ENCODE measurements at regions of chr10 and their contacts with region 1.

Region 1: GRCh38 chr10:29160110-29160669 is 128.7 kb upstream of the LYZL1 start:
- DNase-seq: no peak
- ATAC-seq: no peak
- H3K4me3 ChIP-seq: no peak overlapping the region
- H3K27ac ChIP-seq: no peak overlapping the region
- H3K4me1 ChIP-seq: peaks cover 0 to 10% (median 0%) of the 10 kb centered on the region in 12 donors
- H3K27me3 ChIP-seq: no peaks in the 10 kb centered on the region
- CTCF ChIP-seq: no peak
- POLR2A ChIP-seq: no peak

Region 2: DNA sequence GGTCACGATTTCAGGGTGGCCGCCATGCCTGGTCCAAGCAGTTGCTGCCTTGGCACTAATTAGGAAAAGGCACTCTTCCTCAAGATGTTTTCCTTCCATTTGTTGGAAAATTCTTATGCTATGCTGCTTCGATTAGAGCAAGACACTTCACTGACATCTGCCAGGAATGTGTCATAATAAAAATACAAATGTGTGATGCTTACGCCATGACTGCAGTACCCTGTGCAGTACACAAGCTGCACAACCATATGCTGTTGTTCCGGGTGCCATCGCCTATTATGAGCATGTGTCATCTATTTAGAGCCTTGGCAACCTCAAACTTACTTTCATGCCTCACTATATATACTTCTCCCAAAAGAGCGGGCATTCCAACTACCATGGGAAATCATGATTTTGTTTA is 842.4 kb before region 1 on chr10:
- intact Hi-C with region 1: no loop called
- DNase-seq: no peak
- ATAC-seq: no peak
- H3K4me3 ChIP-seq: no peak overlapping the region
- H3K27ac ChIP-seq: no peak overlapping the region
- H3K4me1 ChIP-seq: no peaks in the 10 kb centered on the region
- H3K27me3 ChIP-seq: peaks cover 0 to 2% (median 0%) of the 10 kb centered on the region in 9 donors
- CTCF ChIP-seq: no peak
- POLR2A ChIP-seq: no peak

Region 3: GRCh38 chr10:29089091-29089490 is 71.1 kb before region 1 on chr10:
- intact Hi-C with region 1: no loop called
- DNase-seq: no peak
- ATAC-seq: no peak
- H3K4me3 ChIP-seq: no peak overlapping the region
- H3K27ac ChIP-seq: no peak overlapping the region
- H3K4me1 ChIP-seq: no peaks in the 10 kb centered on the region
- H3K27me3 ChIP-seq: no peaks in the 10 kb centered on the region
- CTCF ChIP-seq: no peak
- POLR2A ChIP-seq: no peak

Region 4: GRCh38 chr10:29171711-29172110 is 11.5 kb after region 1 on chr10:
- intact Hi-C with region 1: loop called in 1 of 10 experiments (anchors 1 kb)
- DNase-seq: no peak
- ATAC-seq: no peak
- H3K4me3 ChIP-seq: no peak overlapping the region
- H3K27ac ChIP-seq: no peak overlapping the region
- H3K4me1 ChIP-seq: no peaks in the 10 kb centered on the region
- H3K27me3 ChIP-seq: peaks cover 0 to 3% (median 0%) of the 10 kb centered on the region in 9 donors
- CTCF ChIP-seq: no peak
- POLR2A ChIP-seq: no peak

Region 5: GRCh38 chr10:29181936-29182335 is 21.7 kb after region 1 on chr10:
- intact Hi-C with region 1: no loop called
- DNase-seq: no peak
- ATAC-seq: no peak
- H3K4me3 ChIP-seq: no peak overlapping the region
- H3K27ac ChIP-seq: no peak overlapping the region
- H3K4me1 ChIP-seq: no peaks in the 10 kb centered on the region
- H3K27me3 ChIP-seq: peaks cover 0 to 5% (median 0%) of the 10 kb centered on the region in 9 donors
- CTCF ChIP-seq: no peak
- POLR2A ChIP-seq: no peak

Region 6: GRCh38 chr10:29214551-29214950 is 54.4 kb after region 1 on chr10:
- intact Hi-C with region 1: no loop called
- DNase-seq: no peak
- ATAC-seq: no peak
- H3K4me3 ChIP-seq: no peak overlapping the region
- H3K27ac ChIP-seq: no peak overlapping the region
- H3K4me1 ChIP-seq: no peaks in the 10 kb centered on the region
- H3K27me3 ChIP-seq: no peaks in the 10 kb centered on the region
- CTCF ChIP-seq: no peak
- POLR2A ChIP-seq: no peak

Region 7: DNA sequence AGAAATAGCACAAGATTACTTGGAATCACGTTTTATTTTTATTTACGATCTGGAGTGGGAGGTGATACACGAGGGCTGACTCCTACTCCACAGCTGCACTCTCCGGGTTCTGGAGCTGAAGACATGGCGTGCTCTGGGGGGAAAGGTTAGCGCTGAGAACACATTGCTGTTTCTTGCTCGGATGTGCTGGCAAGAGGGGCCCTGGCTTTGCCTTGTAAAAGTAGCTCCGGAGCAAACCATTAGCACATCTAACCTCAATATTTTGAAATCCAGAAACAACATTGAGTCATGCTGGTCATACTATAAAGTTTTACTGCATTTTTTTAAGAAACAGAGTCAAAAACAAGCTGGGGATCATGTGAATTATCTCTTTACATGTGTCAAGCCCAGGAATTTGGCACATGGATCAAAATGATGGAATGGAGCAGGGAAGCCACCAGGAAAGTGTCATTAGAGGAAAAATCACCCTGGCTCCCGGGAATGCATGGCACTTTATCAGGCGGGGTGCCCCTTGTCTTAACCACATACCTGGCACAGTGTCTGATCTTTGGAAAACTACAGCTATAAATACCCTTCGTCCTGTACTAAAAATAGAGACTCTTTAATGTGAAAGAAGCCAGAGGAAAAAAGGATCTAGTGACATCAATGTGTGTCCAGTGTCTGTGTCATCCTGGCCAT is 97.1 kb after region 1 on chr10:
- intact Hi-C with region 1: loop called in 1 of 10 experiments (anchors 10 kb)
- DNase-seq: peak in 4 of 5 donors; percentile 26 to 63 (median 44)
- ATAC-seq: peak; percentile 80 to 89 (median 84)
- H3K4me3 ChIP-seq: no peak overlapping the region
- H3K27ac ChIP-seq: peak overlapping the region in 8 of 12 donors; percentile 31 to 76 (median 54)
- H3K4me1 ChIP-seq: peaks cover 0 to 48% (median 19%) of the 10 kb centered on the region in 12 donors
- H3K27me3 ChIP-seq: no peaks in the 10 kb centered on the region
- CTCF ChIP-seq: no peak
- POLR2A ChIP-seq: no peak

Measured in heart left ventricle (tissue), 16 donors.